CD8-positive, alpha-beta T cell (primary cell): ENCODE measurements at regions of chr5 and their contacts with region 1.

Region 1: GRCh38 chr5:20572614-20573013 is 584.6 kb upstream of the CDH18 start:
- DNase-seq: no peak
- ATAC-seq: no peak
- H3K4me3 ChIP-seq: no peak overlapping the region
- H3K4me3 Mint-ChIP-seq: no peak overlapping the region
- H3K27ac ChIP-seq: no peak overlapping the region
- H3K27ac Mint-ChIP-seq: no peak overlapping the region
- H3K4me1 ChIP-seq: no peaks in the 10 kb centered on the region
- H3K4me1 Mint-ChIP-seq: no peaks in the 10 kb centered on the region
- H3K27me3 ChIP-seq: no peaks in the 10 kb centered on the region
- H3K27me3 Mint-ChIP-seq: no peaks in the 10 kb centered on the region
- CTCF ChIP-seq: no peak

Region 2: DNA sequence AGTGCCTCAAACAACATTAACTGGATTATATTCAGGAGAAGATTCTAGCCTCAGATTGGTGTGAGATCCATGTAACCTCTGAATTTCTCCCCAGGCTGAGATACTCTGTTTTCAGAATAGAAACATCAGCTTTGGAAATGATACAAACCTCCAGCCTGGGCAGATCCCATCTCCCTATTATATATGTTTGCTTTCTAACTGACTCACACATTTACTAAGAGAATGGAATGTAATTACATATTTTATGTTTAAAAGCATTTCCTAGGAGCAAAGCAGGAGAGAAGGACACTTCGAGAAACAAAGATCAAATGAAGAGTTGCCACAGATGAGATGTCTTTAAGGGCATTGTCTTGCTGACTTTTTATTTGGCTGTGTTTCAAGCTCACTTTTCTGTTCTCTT is 681.0 kb before region 1 on chr5:
- CTCF ChIA-PET with region 1: no interaction called
- POLR2A ChIA-PET with region 1: no interaction called
- intact Hi-C with region 1: no loop called
- DNase-seq: no peak
- ATAC-seq: no peak
- H3K4me3 ChIP-seq: no peak overlapping the region
- H3K4me3 Mint-ChIP-seq: no peak overlapping the region
- H3K27ac ChIP-seq: no peak overlapping the region
- H3K27ac Mint-ChIP-seq: no peak overlapping the region
- H3K4me1 ChIP-seq: no peaks in the 10 kb centered on the region
- H3K4me1 Mint-ChIP-seq: no peaks in the 10 kb centered on the region
- H3K27me3 ChIP-seq: no peaks in the 10 kb centered on the region
- H3K27me3 Mint-ChIP-seq: no peaks in the 10 kb centered on the region
- CTCF ChIP-seq: no peak

Region 3: DNA sequence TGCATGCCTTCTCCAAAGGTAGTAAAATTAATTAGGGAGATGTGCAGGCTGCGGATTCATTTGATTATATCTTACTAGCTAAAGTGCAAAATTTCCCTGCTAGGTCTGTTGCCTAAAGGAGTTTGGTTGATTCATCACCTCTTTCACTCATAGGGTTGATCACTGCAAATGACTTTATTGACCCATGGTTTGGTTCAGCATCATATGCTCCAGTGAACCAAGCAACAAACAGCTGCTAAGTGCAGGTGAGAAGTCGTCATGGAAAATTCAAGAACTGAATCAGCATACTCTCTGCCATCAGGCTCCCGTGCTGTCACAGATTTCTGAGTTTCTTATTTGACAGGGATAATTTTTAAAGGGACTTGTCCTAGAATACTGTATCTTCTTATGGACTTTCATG is 12.8 kb before region 1 on chr5:
- CTCF ChIA-PET with region 1: no interaction called
- POLR2A ChIA-PET with region 1: no interaction called
- intact Hi-C with region 1: loop called in 1 of 2 experiments (anchors 1 kb)
- DNase-seq: no peak
- ATAC-seq: no peak
- H3K4me3 ChIP-seq: no peak overlapping the region
- H3K4me3 Mint-ChIP-seq: no peak overlapping the region
- H3K27ac ChIP-seq: no peak overlapping the region
- H3K27ac Mint-ChIP-seq: no peak overlapping the region
- H3K4me1 ChIP-seq: no peaks in the 10 kb centered on the region
- H3K4me1 Mint-ChIP-seq: no peaks in the 10 kb centered on the region
- H3K27me3 ChIP-seq: no peaks in the 10 kb centered on the region
- H3K27me3 Mint-ChIP-seq: no peaks in the 10 kb centered on the region
- CTCF ChIP-seq: no peak